HEK293 (cell line): ENCODE measurements at regions of chr7 and their contacts with region 1.

Region 1: GRCh38 chr7:128387216-128388144 is 22.3 kb downstream of the IMPDH1 start:
- H3K4me3 ChIP-seq: no peak overlapping the region
- H3K27ac ChIP-seq: no peak overlapping the region
- H3K4me1 ChIP-seq: no peaks in the 10 kb centered on the region
- CTCF ChIP-seq: peak; percentile 88

Region 2: GRCh38 chr7:128356546-128357216 is 30.8 kb before region 1 on chr7:
- CTCF ChIA-PET with region 1: interaction called, 378 read pairs
- POLR2A ChIA-PET with region 1: no interaction called
- H3K4me3 ChIP-seq: no peak overlapping the region
- H3K27ac ChIP-seq: no peak overlapping the region
- H3K4me1 ChIP-seq: no peaks in the 10 kb centered on the region; the same call in 1 of the 2 replicates
- CTCF ChIP-seq: no peak

Region 3: GRCh38 chr7:128373606-128374005 is 13.9 kb before region 1 on chr7:
- CTCF ChIA-PET with region 1: interaction called, 36 read pairs
- POLR2A ChIA-PET with region 1: no interaction called
- H3K4me3 ChIP-seq: no peak overlapping the region
- H3K27ac ChIP-seq: no peak overlapping the region
- H3K4me1 ChIP-seq: no peaks in the 10 kb centered on the region
- CTCF ChIP-seq: no peak

Region 4: GRCh38 chr7:128398016-128398840 is 10.7 kb after region 1 on chr7:
- CTCF ChIA-PET with region 1: interaction called, 36 read pairs
- POLR2A ChIA-PET with region 1: interaction called, 3 read pairs
- H3K4me3 ChIP-seq: no peak overlapping the region
- H3K27ac ChIP-seq: no peak overlapping the region
- H3K4me1 ChIP-seq: no peaks in the 10 kb centered on the region
- CTCF ChIP-seq: peak; percentile 73